K562 (cell line): ENCODE measurements at regions of chr7 and their contacts with region 1.

Region 1: GRCh38 chr7:4883374-4884144 is at the start of gene RADIL:
- DNase-seq: peak; percentile 95 to 99 (median 99)
- ATAC-seq: peak; percentile 97
- H3K4me3 ChIP-seq: peak within 1 kb of the TSS; percentile 70
- H3K27ac ChIP-seq: peak within 1 kb of the TSS; percentile 75
- H3K4me1 ChIP-seq: peaks cover 9 to 18% of the 10 kb centered on the region in 2 experiments
- H3K27me3 ChIP-seq: peaks cover 0 to 3% of the 10 kb centered on the region in 2 experiments; a peak in 1 of 5 replicates
- CTCF ChIP-seq: peak; percentile 84 to 93 (median 93)
- EP300 ChIP-seq: no peak
- POLR2A ChIP-seq: no peak; the same call in 1 of the 2 replicates
- RAD21 ChIP-seq: peak; percentile 64 to 68
- polyA plus RNA-seq, gene RADIL: 0.06 TPM in 1 of 2 experiments, not detected in the other

Region 2: GRCh38 chr7:4610768-4611467 is 272.6 kb before region 1 on chr7:
- CTCF ChIA-PET with region 1: no interaction called
- POLR2A ChIA-PET with region 1: no interaction called
- in situ Hi-C with region 1: no loop called
- intact Hi-C with region 1: loop called (anchors 10 kb)
- DNase-seq: peak; percentile 59 to 82 (median 64)
- ATAC-seq: peak; percentile 82
- H3K4me3 ChIP-seq: no peak overlapping the region
- H3K27ac ChIP-seq: no peak overlapping the region
- H3K4me1 ChIP-seq: peaks cover 12 to 15% of the 10 kb centered on the region in 2 experiments; a peak in 4 of 5 replicates
- H3K27me3 ChIP-seq: peaks cover 8 to 19% of the 10 kb centered on the region in 2 experiments
- CTCF ChIP-seq: peak; percentile 74 to 91 (median 85)
- EP300 ChIP-seq: no peak
- POLR2A ChIP-seq: no peak
- RAD21 ChIP-seq: peak; percentile 94 to 97

Region 3: GRCh38 chr7:4797858-4798705 is 85.5 kb before region 1 on chr7:
- CTCF ChIA-PET with region 1: interaction called, 13 read pairs
- POLR2A ChIA-PET with region 1: no interaction called
- in situ Hi-C with region 1: no loop called
- intact Hi-C with region 1: loop called (anchors 10 kb)
- DNase-seq: peak; percentile 76 to 86 (median 83)
- ATAC-seq: peak; percentile 92
- H3K4me3 ChIP-seq: no peak overlapping the region
- H3K27ac ChIP-seq: no peak overlapping the region
- H3K4me1 ChIP-seq: peaks cover 0 to 41% of the 10 kb centered on the region in 2 experiments; a peak in 3 of 5 replicates
- H3K27me3 ChIP-seq: no peaks in the 10 kb centered on the region
- CTCF ChIP-seq: peak; percentile 87 to 99 (median 99)
- EP300 ChIP-seq: no peak
- POLR2A ChIP-seq: no peak
- RAD21 ChIP-seq: peak; percentile 70 to 90

Region 4: DNA sequence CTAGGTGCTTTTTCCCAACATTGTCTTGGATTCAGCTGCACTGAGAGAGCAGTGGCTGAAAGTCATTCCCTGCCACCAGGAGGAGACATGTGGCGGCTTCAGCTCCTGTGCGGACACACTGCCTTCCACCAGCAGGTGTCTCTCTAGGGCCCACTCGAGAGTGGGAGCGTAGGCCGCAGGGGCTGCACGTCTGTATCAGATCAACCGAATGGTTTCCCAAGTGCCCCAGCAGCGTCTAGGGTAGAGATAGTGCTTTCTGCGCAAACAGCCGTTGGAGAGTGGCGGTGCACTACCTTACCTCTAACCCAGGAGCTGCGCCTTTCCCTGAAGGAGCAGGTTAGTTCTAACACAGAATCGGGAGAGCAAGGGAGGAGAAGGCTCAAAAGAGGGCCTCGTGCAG is 53.4 kb before region 1 on chr7:
- CTCF ChIA-PET with region 1: interaction called, 6 read pairs
- POLR2A ChIA-PET with region 1: no interaction called
- in situ Hi-C with region 1: no loop called
- intact Hi-C with region 1: loop called (anchors 1 kb)
- DNase-seq: peak; percentile 73 to 88 (median 78)
- ATAC-seq: peak; percentile 99
- H3K4me3 ChIP-seq: no peak overlapping the region
- H3K27ac ChIP-seq: peak overlapping the region; percentile 50; the same call in 1 of the 3 replicates
- H3K4me1 ChIP-seq: peaks cover 3 to 16% of the 10 kb centered on the region in 2 experiments; a peak in 3 of 5 replicates
- H3K27me3 ChIP-seq: no peaks in the 10 kb centered on the region
- CTCF ChIP-seq: peak; percentile 99 to 100 (median 100)
- EP300 ChIP-seq: peak; percentile 53; the same call in 1 of the 2 replicates
- POLR2A ChIP-seq: no peak
- RAD21 ChIP-seq: peak; percentile 66 to 90

Region 5: DNA sequence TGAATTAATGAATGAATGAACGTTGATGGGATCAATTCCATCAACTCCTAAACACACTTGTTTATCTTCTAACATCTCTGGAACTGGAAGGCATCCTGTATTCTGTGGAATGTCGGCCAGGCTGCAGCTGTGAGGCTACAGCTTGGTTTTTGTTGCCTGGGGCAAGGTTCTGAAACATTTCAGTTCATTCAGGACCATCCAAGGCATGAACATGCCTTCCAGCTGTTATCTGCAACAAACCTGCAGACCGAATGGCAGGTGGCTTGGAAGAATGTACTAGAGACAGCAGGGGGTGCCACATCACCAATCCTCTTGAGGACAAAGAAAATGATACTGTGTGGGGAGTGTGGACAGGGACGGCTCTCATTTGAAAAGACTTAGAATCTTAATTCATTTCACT is 34.2 kb before region 1 on chr7:
- CTCF ChIA-PET with region 1: interaction called, 11 read pairs
- POLR2A ChIA-PET with region 1: no interaction called
- in situ Hi-C with region 1: no loop called
- intact Hi-C with region 1: loop called (anchors 1 kb)
- DNase-seq: peak; percentile 48 to 69 (median 60)
- ATAC-seq: peak; percentile 85
- H3K4me3 ChIP-seq: no peak overlapping the region
- H3K27ac ChIP-seq: no peak overlapping the region
- H3K4me1 ChIP-seq: peaks cover 6 to 7% of the 10 kb centered on the region in 2 experiments; a peak in 3 of 5 replicates
- H3K27me3 ChIP-seq: no peaks in the 10 kb centered on the region
- CTCF ChIP-seq: peak; percentile 61 to 77 (median 66)
- EP300 ChIP-seq: no peak
- POLR2A ChIP-seq: no peak
- RAD21 ChIP-seq: peak; percentile 49 to 71